Mucosa of descending colon (tissue), 3 donors: ENCODE measurements at regions of chr2 and their contacts with region 1.

Region 1: DNA sequence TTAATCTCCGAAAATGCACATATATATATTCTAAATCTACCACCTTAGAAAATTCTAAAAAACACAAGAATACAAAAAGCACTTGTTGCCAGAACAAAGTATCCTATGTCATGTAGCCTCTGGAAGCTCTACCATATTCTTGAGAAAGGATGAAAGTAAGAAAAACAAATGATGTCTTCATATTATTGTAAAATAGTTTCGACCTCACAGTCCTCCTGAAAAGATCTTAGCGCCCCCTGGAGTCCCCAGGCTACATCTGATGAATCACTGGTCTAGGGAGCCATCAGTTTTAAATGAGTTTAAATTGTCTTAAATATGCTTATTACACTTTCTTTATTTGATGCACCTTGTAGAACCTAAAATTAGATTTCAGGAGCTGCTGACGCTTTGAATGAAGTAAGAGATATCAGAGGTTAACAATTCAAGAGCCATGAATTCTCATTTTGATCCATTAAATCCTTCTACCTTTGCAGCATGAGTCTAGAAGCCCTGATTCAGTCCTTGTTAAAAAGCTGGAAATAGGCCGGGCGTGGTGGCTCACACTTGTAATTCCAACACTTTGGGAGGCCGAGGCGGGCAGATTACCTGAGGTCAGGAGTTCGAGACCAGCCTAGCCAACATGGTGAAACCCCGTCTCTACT is 138.8 kb downstream of the MCFD2 start:
- DNase-seq: peak in 2 of 3 donors; percentile 41 to 84
- ATAC-seq: peak; percentile 36
- H3K4me3 ChIP-seq: no peak overlapping the region
- H3K4me1 ChIP-seq: no peaks in the 10 kb centered on the region
- CTCF ChIP-seq: peak; percentile 50

Region 2: GRCh38 chr2:46657042-46657504 is 119.7 kb before region 1 on chr2:
- intact Hi-C with region 1: loop called in 1 of 2 experiments (anchors 5 kb)
- DNase-seq: peak in 1 of 3 donors; percentile 30
- ATAC-seq: peak; percentile 62
- H3K4me3 ChIP-seq: no peak overlapping the region
- H3K4me1 ChIP-seq: peaks cover 4% of the 10 kb centered on the region
- CTCF ChIP-seq: no peak

Region 3: GRCh38 chr2:46876741-46877384 is 100.1 kb after region 1 on chr2:
- intact Hi-C with region 1: loop called in 1 of 2 experiments (anchors 10 kb)
- DNase-seq: peak in 2 of 3 donors; percentile 45 to 47
- ATAC-seq: peak; percentile 78
- H3K4me3 ChIP-seq: no peak overlapping the region
- H3K4me1 ChIP-seq: peaks cover 1% of the 10 kb centered on the region
- CTCF ChIP-seq: no peak

Region 4: GRCh38 chr2:46887028-46887885 is 110.5 kb after region 1 on chr2:
- intact Hi-C with region 1: no loop called
- DNase-seq: no peak
- ATAC-seq: no peak
- H3K4me3 ChIP-seq: no peak overlapping the region
- H3K4me1 ChIP-seq: peaks cover 8% of the 10 kb centered on the region
- CTCF ChIP-seq: no peak

Region 5: DNA sequence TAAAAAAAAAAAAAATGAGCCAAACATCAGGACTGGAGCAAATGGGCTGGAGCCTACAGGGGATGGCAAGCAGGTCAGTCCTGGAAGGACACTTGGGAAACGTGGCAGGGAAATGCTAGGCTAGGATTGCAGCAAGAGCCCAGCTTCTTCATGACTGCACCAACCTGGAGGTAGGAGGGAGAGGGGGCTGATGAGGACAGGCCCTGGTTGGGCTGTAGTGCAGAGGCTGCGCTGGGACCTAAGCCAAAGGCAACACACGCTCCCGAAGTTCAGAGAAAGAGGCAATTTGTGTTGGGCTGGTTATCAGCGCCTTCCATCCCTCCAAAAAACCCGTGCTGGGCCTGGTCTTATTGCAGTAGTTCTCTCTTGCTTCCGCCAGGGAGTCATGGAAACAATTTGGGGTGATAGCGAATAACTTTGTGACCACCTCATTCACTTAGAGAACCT is 460.6 kb after region 1 on chr2:
- intact Hi-C with region 1: no loop called
- DNase-seq: no peak
- ATAC-seq: no peak
- H3K4me3 ChIP-seq: no peak overlapping the region
- H3K4me1 ChIP-seq: peaks cover 5% of the 10 kb centered on the region
- CTCF ChIP-seq: no peak